ENCODE measurements at regions of chr21 and their contacts with region 1.

Region 1: GRCh38 chr21:44752634-44753291 is 41.4 kb upstream of the TSPEAR start:
- DNase-seq: no peak
- ATAC-seq: no peak
- H3K4me3 Mint-ChIP-seq: no peak overlapping the region
- H3K27ac Mint-ChIP-seq: no peak overlapping the region
- H3K4me1 Mint-ChIP-seq: no peaks in the 10 kb centered on the region
- H3K27me3 Mint-ChIP-seq: peaks cover 15% of the 10 kb centered on the region
- CTCF ChIP-seq: no peak

Region 2: GRCh38 chr21:42845296-42845965 is 1907.3 kb before region 1 on chr21:
- CTCF ChIA-PET with region 1: no interaction called
- POLR2A ChIA-PET with region 1: no interaction called
- intact Hi-C with region 1: no loop called
- DNase-seq: no peak
- ATAC-seq: no peak
- H3K4me3 Mint-ChIP-seq: no peak overlapping the region
- H3K27ac Mint-ChIP-seq: no peak overlapping the region
- H3K4me1 Mint-ChIP-seq: no peaks in the 10 kb centered on the region
- H3K27me3 Mint-ChIP-seq: no peaks in the 10 kb centered on the region
- CTCF ChIP-seq: no peak

Region 3: GRCh38 chr21:42991992-42992740 is 1760.6 kb before region 1 on chr21:
- CTCF ChIA-PET with region 1: no interaction called
- POLR2A ChIA-PET with region 1: interaction called, 10 read pairs
- intact Hi-C with region 1: no loop called
- DNase-seq: no peak
- ATAC-seq: peak; percentile 40
- H3K4me3 Mint-ChIP-seq: no peak overlapping the region
- H3K27ac Mint-ChIP-seq: no peak overlapping the region
- H3K4me1 Mint-ChIP-seq: peaks cover 29% of the 10 kb centered on the region
- H3K27me3 Mint-ChIP-seq: no peaks in the 10 kb centered on the region
- CTCF ChIP-seq: no peak